Mammary epithelial cell (primary cell): ENCODE measurements at regions of chr19 and their contacts with region 1.

Region 1: DNA sequence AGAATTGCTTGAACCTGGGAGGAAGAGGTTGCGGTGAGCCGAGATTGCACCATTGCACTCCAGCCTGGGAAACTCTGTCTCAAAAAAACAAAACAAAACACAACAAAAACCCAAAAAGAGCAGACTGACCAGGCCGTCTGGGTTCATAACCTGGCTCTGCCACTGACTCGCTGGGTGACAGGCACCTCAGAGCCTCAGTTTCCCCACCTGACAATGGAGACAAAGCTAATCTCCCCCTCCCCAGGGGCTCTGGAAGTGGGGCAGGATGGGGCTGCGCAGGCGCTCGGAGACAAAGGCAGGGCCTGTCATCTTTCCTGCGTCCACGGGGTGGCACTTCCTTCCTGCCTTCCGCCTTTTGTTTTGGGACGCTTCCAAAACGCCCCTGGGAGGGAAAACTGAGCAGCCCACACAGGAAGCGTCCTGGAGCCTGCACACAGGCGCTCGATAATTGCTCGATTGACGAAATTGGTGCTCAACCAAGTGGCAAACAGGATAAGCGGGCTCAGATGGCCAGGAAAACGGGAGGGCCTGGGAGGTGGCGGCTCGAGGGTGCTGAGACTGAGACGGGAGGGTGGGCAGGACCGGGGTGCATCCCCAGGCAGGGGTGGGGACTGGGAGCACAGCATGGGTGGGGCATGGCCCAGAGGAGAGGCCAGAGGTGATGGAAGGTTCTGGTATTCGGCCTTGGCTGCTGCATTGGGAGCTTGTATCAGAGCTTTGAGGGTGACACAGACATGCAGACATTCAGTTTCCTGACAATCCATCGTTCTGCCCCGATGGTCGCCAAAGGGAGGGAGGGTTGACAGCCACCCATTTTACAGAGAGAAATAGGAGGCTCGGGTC is 17.8 kb downstream of the SPC24 start:
- DNase-seq: peak; percentile 78
- H3K4me3 ChIP-seq: peak overlapping the region in 1 of 3 experiments; percentile 32
- H3K27ac ChIP-seq: no peak overlapping the region
- H3K4me1 ChIP-seq: peaks cover 29% of the 10 kb centered on the region
- H3K27me3 ChIP-seq: no peaks in the 10 kb centered on the region
- CTCF ChIP-seq: peak; percentile 78 to 92

Region 2: GRCh38 chr19:11155373-11156120 is 17.8 kb after region 1 on chr19 and contains the start of gene SPC24:
- CTCF ChIA-PET with region 1: no interaction called
- dilution Hi-C with region 1: no loop called
- in situ Hi-C with region 1: no loop called
- intact Hi-C with region 1: loop called (anchors 2 kb)
- DNase-seq: peak; percentile 97
- H3K4me3 ChIP-seq: peak within 1 kb of the TSS; percentile 58 to 80 (median 76)
- H3K27ac ChIP-seq: peak within 1 kb of the TSS; percentile 48
- H3K4me1 ChIP-seq: peaks cover 25% of the 10 kb centered on the region
- H3K27me3 ChIP-seq: no peaks in the 10 kb centered on the region
- CTCF ChIP-seq: no peak
- total RNA-seq, gene SPC24: 2.2 to 35.4 TPM

Region 3: DNA sequence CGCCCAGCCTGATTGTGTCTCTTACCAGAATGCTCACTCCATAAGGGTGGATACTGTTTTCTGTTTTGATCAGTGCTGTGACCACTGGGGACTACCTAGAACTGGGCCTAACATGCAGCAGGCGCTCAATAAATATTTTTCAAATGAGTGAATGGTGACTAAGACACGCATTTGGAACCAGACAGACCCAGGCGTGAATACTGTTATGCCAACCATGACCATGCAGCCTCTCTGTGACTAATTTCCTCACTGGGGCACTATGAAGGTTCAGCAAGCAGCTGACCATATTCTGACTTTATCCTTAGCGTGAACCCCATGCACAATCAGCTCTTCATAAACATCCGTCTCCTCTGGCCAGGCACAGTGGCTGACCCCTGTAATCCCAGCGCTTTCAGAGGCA is 30.8 kb after region 1 on chr19:
- CTCF ChIA-PET with region 1: no interaction called
- dilution Hi-C with region 1: no loop called
- in situ Hi-C with region 1: no loop called
- intact Hi-C with region 1: loop called (anchors 1 kb)
- DNase-seq: peak; percentile 97
- H3K4me3 ChIP-seq: no peak overlapping the region
- H3K27ac ChIP-seq: peak overlapping the region; percentile 65
- H3K4me1 ChIP-seq: peaks cover 18% of the 10 kb centered on the region
- H3K27me3 ChIP-seq: no peaks in the 10 kb centered on the region
- CTCF ChIP-seq: peak in 1 of 2 donors; percentile 4

Region 4: DNA sequence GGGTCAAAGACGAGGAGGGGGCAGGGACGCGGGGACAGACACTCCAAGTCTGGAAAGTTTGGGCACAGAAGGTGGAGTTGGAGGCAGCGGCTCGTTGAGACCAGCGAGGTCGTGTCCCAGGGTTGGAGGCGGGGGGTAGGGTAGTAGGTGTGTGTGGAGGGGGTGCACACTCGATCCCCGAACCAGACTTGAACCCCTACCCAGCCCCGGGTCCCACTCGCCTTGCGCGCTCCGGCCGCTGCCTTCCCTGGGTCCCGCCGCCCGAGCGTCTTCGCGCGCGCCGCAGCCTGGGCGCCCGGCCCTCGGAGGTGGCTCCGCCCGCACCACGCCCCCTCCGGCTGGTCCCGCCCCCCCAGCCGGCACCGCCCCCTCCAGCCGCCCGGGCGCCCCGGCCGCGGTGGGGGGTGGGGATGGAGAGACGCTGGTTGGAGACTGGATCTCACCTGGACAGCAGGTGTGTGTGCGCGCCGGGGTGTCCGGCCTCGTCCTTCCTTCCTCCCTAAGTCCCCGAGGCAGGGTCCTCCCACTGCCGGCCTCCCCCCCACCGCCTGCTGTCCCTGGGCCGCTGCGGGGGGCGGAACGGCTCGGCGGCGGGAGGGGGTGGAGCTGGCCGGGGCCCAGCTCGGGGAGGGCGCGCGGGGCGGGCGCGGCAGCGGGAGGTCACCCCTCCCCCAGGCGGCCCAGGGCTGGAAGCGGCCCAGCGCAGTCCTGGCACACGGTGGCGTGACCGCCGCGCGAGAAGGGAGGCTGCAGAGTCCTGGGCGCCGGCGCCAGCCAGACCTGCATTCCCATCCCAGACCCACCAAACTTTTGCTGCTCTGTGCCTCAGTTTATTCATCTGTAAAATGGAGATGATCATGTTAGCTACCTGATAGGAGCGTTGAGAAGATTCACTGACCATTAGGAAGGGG is 59.8 kb after region 1 on chr19 and contains the start of gene KANK2:
- CTCF ChIA-PET with region 1: no interaction called
- dilution Hi-C with region 1: no loop called
- in situ Hi-C with region 1: loop called in 1 of 2 experiments (anchors 5 kb)
- intact Hi-C with region 1: loop called (anchors 2 kb)
- DNase-seq: peak; percentile 76
- H3K4me3 ChIP-seq: peak within 1 kb of the TSS; percentile 70 to 83 (median 81)
- H3K27ac ChIP-seq: no peak within 1 kb of the TSS
- H3K4me1 ChIP-seq: no peaks in the 10 kb centered on the region
- H3K27me3 ChIP-seq: no peaks in the 10 kb centered on the region
- CTCF ChIP-seq: no peak
- total RNA-seq, gene KANK2: 18.2 to 19.4 TPM

Region 5: DNA sequence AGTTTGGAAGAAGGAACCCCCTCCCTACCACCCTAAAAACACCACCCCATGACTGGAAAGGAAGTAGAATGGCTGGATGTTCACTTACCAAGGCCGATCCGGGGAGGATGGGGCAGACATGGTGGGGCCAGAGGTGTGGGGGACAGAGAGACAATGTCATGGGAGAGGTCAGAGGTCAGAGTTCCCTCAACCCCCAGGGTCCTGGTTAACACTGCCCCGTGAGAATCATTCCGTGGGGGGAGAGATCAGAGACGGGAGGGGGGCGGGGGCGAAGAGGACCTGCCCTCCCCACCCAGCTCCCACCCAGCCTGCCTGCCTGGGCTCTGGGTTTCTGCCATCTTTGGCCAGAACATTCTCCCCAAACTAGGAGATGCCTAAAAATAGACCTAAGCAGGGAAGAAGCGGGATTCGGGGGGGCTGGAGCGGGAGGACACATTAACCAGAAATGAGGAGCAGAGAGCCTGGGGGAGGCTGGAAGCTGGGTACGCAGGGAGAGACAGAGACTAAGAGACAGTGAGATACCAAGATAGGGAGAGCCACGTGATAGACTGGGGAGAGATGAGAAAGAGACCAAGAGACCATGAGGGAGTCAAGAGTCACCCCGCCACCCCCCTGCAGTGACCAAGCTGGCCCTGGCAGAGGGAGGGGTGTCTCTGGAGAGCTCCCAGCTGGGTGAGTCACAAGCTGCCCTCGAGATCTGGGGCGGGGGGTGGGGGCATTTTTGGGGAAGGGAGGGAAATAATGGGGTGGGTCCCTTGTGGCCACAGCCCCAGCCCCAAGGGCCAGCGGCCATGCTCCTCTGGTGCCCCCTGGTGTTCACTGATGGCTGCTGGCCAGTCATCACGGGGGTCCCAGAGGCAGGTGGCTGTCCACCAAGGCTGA is 65.7 kb after region 1 on chr19:
- CTCF ChIA-PET with region 1: interaction called, 17 read pairs
- dilution Hi-C with region 1: no loop called
- in situ Hi-C with region 1: loop called in 1 of 2 experiments (anchors 5 kb)
- intact Hi-C with region 1: loop called (anchors 1 kb)
- DNase-seq: peak; percentile 11
- H3K4me3 ChIP-seq: no peak overlapping the region
- H3K27ac ChIP-seq: no peak overlapping the region
- H3K4me1 ChIP-seq: peaks cover 19% of the 10 kb centered on the region
- H3K27me3 ChIP-seq: no peaks in the 10 kb centered on the region
- CTCF ChIP-seq: peak; percentile 54 to 89

Region 6: DNA sequence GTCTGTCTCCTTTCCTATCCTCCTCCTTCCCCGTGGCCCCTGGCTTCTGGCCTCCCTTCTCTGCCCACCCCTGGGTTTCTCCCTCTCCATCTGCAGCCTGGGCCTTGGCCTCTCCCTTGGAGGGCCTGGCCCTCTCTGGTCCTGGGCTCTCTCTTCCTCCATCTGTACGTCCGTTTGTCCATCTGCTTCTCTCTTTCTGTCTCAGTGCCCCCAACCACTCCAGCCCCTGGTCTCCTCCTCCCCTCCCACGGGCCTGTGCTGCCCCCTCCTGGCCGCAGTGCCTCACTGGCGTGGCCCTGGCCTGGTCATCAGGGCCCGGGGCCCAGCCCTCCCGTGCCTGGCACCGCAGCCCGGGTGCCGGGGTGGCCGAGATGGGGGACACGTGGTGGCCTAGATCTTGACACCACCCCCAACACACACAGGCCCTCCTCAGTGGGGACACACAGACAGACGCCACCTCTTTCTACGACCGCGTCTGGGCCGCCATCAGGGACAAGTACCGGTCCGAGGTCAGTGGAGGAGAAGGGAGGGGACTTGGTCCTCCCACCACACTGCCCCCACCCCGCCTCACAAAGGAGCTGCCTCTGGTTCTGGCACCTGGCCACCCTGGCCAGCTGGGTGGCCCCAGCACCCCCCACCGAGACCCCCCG is 309.0 kb after region 1 on chr19:
- CTCF ChIA-PET with region 1: no interaction called
- dilution Hi-C with region 1: no loop called
- in situ Hi-C with region 1: no loop called
- intact Hi-C with region 1: loop called (anchors 5 kb)
- DNase-seq: no peak
- H3K4me3 ChIP-seq: no peak overlapping the region
- H3K27ac ChIP-seq: no peak overlapping the region
- H3K4me1 ChIP-seq: peaks cover 16% of the 10 kb centered on the region
- H3K27me3 ChIP-seq: no peaks in the 10 kb centered on the region
- CTCF ChIP-seq: peak; percentile 51 to 75

Region 7: DNA sequence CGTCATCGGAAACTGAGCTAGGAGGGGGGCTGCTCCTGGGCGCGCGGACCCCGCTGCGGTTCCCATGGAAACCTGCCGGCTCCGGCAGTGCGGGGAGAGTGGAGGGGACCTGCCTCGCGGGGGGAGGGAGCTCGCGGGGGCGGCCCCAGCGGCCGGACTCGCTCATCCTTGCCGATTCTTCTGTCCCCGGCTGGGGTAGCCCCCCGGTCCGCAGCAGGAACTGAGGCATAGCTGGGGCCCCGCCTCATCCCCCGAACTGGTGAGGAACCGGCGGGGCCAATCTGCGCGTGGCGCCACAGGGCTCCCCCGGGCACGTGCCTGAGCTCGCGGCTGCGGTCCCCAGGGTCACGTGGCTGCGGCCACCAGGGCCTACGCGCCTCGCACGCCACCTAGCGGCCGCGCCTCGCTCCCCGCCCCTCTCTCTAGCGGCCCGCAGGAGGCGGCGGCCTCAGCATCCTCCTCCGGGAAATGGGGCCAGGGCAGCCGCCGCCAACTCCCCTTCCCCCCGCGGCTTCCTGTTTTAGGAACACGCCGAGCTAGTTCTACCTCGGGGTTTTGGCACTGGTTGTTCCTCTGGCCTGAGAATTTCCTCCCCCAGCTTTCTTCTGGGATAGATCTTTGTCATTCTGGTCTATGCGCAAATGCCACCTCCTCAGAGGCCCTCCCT is 344.8 kb after region 1 on chr19:
- CTCF ChIA-PET with region 1: no interaction called
- dilution Hi-C with region 1: no loop called
- in situ Hi-C with region 1: loop called in 1 of 2 experiments (anchors 25 kb)
- intact Hi-C with region 1: loop called (anchors 2 kb)
- DNase-seq: peak; percentile 69
- H3K4me3 ChIP-seq: peak overlapping the region; percentile 31 to 40 (median 35)
- H3K27ac ChIP-seq: no peak overlapping the region
- H3K4me1 ChIP-seq: peaks cover 9% of the 10 kb centered on the region
- H3K27me3 ChIP-seq: peaks cover 25% of the 10 kb centered on the region
- CTCF ChIP-seq: peak; percentile 61 to 91